ENCODE measurements at regions of chr5 and their contacts with region 1.

Region 1: GRCh38 chr5:472656-473553 is 29.9 kb downstream of the EXOC3 start:
- DNase-seq: peak in 1 of 2 donors; percentile 91
- H3K4me3 ChIP-seq: peak overlapping the region; percentile 91 to 100
- H3K27ac ChIP-seq: peak overlapping the region; percentile 52 to 66
- H3K4me1 ChIP-seq: peaks cover 10 to 15% of the 10 kb centered on the region in 2 donors
- H3K27me3 ChIP-seq: no peaks in the 10 kb centered on the region
- CTCF ChIP-seq: no peak

Region 2: DNA sequence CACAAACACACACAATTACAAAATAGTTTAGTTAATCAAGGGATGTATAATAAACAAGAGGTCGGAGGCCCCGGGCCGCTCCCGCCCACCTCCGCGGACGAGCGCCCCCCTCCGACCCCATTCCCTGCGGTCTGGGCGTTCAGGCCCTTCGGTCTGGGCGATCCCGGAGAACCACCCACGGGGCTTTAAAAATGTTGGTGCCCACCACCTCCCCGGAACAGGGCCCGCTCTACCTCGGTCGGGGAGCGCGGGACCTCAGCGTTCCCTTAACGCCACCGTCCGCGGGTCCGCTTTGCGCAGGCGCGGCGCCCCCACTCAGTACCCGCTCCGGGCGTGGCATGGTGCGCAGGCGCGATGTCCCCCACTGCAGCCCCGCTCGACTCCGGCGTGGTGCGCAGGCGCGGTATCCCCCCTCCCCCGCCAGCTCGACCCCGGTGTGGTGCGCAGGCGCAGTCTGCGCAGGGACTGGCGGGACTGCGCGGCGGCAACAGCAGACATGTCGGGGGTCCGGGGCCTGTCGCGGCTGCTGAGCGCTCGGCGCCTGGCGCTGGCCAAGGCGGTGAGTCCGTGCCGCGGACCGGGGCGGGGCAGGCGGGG is 254.9 kb before region 1 on chr5 and contains the starts of genes CCDC127 and SDHA:
- intact Hi-C with region 1: loop called (anchors 2 kb)
- DNase-seq: peak; percentile 86 to 98
- H3K4me3 ChIP-seq: peak within 1 kb of the TSS; percentile 95 to 98
- H3K27ac ChIP-seq: peak within 1 kb of the TSS; percentile 80 to 91
- H3K4me1 ChIP-seq: peaks cover 0 to 12% of the 10 kb centered on the region in 2 donors
- H3K27me3 ChIP-seq: no peaks in the 10 kb centered on the region
- CTCF ChIP-seq: peak in 2 of 3 experiments; percentile 38 to 50
- total RNA-seq, gene CCDC127: 6.1 TPM
- total RNA-seq, gene SDHA: 41.1 TPM

Region 3: GRCh38 chr5:442335-443238 is 30.3 kb before region 1 on chr5 and contains the start of gene EXOC3:
- intact Hi-C with region 1: loop called (anchors 1 kb)
- DNase-seq: peak in 1 of 2 donors; percentile 82
- H3K4me3 ChIP-seq: peak within 1 kb of the TSS; percentile 71 to 92
- H3K27ac ChIP-seq: peak within 1 kb of the TSS; percentile 76
- H3K4me1 ChIP-seq: peaks cover 12% of the 10 kb centered on the region in 2 donors
- H3K27me3 ChIP-seq: no peaks in the 10 kb centered on the region
- CTCF ChIP-seq: no peak
- total RNA-seq, gene EXOC3: 56.7 TPM

Region 4: DNA sequence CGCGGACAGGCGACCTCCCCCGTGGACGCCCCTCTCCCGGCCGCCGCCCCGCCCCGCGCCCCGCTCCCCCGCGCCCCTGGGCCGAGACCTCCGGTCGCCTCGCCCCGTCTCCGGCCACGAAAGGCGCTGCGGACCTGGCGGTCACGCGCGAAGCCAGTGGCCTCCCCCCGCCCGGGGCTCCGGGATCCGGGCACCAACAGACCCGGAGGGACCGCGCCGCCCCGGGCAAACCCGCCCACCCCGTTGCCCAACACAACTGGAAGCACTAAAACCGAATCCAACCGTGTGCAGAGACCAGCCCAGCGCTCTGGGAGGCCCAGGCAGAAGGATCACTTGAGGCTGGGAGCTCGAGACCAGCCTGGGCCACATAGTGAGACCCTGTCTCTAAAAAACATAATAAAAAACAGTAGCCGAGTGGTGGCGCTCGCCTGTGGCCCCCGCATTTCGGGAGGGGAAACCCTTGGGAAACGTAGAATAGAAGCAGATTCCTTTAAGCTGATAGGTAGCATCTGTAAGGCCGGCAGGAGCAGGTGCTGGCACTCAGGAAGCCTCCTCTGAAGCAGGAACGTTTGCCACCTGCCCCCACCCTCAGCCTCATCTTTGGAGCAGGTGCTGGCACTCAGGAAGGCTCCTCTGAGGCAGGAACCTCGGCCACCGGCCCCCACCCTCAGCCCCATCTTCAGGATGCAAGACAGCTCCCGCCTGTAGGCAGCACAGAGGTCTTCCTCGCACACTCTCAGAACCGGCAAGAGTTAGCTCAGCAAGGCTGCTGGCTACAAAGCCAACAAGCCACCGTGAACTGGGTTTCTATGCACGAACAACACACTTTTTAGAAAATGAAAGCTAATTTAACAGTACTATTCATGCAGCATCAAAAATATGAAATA is 56.0 kb after region 1 on chr5:
- intact Hi-C with region 1: no loop called
- DNase-seq: no peak
- H3K4me3 ChIP-seq: no peak overlapping the region
- H3K27ac ChIP-seq: no peak overlapping the region
- H3K4me1 ChIP-seq: no peaks in the 10 kb centered on the region
- H3K27me3 ChIP-seq: peaks cover 12% of the 10 kb centered on the region
- CTCF ChIP-seq: no peak

Region 5: GRCh38 chr5:691817-692528 is 219.1 kb after region 1 on chr5:
- intact Hi-C with region 1: loop called (anchors 5 kb)
- DNase-seq: no peak
- H3K4me3 ChIP-seq: peak overlapping the region; percentile 74 to 90
- H3K27ac ChIP-seq: no peak overlapping the region
- H3K4me1 ChIP-seq: peaks cover 0 to 3% of the 10 kb centered on the region in 2 donors
- H3K27me3 ChIP-seq: no peaks in the 10 kb centered on the region
- CTCF ChIP-seq: no peak

Region 6: DNA sequence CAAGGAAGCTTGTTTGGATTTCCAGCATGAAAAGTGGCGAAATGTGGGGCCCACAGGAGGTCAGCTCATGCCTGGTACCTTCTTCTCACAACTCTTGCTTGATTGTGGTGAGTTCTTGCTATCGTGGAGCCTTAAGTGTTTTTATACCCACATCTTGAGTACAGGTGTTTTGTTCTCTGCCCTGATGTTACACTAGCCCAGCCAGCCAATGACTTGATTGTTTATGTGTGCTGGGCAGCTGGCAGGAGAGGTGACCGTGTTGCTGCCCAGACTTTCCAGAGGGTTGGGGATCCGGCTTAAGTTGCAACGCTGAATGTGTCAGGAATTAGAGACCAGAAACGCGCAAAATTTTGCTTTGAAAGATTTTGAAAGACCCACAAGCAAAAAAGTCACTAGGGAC is 244.2 kb after region 1 on chr5:
- intact Hi-C with region 1: no loop called
- DNase-seq: no peak
- H3K4me3 ChIP-seq: no peak overlapping the region
- H3K27ac ChIP-seq: no peak overlapping the region
- H3K4me1 ChIP-seq: no peaks in the 10 kb centered on the region
- H3K27me3 ChIP-seq: no peaks in the 10 kb centered on the region
- CTCF ChIP-seq: no peak

Region 7: DNA sequence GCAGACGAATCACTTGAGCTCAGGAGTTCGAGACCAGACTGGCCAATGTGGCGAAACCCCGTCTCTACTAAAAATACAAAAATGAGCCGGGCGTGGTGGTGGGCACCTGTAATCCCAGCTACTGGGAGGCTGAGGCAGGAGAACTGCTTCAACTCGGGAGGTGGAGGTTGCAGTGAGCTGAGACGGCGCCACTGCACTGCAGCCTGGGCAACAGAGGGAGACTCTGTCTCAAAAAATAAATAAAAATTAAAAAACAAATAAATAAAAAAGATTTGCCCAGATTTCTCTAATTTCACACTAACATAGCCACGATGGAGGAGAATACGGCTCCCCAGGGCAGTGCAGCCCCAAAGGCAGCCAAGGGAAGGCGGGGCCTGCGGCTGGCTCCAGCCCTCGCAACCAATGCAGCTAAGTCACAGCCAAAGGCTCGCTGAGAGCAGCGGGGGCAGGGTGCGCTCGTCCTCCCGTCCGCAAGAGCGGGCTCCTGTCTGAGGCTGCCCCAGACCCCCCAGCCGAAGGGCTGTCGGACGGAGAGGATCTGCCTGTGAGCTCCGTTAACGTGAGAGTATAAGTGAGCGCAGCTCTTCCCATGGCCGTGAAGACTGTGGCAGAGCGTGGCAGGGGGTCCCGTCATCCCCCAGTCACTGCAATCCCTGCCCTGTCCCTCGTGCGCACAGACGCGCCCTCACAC is 595.4 kb after region 1 on chr5:
- intact Hi-C with region 1: no loop called
- DNase-seq: no peak
- H3K4me3 ChIP-seq: no peak overlapping the region
- H3K27ac ChIP-seq: no peak overlapping the region
- H3K4me1 ChIP-seq: no peaks in the 10 kb centered on the region
- H3K27me3 ChIP-seq: no peaks in the 10 kb centered on the region
- CTCF ChIP-seq: no peak

Region 8: DNA sequence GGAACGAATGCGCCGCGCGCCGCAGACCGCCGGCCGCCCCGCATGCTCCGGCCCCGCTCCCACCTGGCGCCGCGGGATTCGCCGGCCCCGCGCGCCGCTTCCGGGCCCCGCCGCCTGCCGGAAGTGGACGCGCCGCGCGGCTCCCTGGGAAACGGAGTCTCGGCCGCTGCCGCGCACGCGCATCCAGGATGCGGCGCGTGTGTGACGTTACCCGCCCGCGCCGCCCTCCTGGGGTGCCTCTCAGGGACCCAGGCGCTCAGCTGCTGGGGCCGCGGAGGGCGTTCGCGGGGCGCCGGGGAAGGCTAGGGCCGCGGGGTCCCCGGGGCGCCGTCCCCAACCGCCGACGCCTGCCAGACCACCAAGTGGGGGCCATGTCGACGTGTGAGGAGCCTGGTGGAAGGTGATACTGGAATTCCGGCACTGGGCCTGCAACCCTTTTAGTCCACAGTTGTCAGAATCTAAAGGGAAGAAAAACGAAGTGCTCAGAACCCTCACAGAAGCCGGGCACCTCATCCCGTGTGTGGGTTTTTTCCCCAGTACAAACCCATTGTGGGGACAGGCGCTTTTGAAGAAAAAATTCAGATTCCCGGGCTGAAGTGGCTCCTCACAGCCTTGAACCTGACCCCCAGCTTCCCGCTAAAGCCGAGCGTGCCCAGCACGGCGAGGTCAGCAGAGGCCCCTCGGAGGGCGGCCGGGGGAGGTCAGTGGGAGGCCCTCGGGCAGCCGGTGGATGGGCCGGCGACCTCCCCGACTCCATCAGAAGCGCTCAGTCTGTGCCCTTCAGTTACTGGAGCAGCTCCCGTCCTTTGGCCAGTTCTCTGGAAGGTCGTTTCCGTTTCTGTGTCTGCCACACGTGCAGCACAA is 872.3 kb after region 1 on chr5 and contains the start of gene CLPTM1L:
- intact Hi-C with region 1: loop called (anchors 5 kb)
- DNase-seq: peak; percentile 37 to 92
- H3K4me3 ChIP-seq: peak within 1 kb of the TSS; percentile 62 to 96
- H3K27ac ChIP-seq: peak within 1 kb of the TSS; percentile 79 to 88
- H3K4me1 ChIP-seq: peaks cover 2 to 17% of the 10 kb centered on the region in 2 donors
- H3K27me3 ChIP-seq: no peaks in the 10 kb centered on the region
- CTCF ChIP-seq: peak in 1 of 3 experiments; percentile 25
- total RNA-seq, gene CLPTM1L: 23.6 TPM

Measured in ascending aorta (tissue), 2 donors.